ENCODE measurements at regions of chr20 and their contacts with region 1.

Region 1: DNA sequence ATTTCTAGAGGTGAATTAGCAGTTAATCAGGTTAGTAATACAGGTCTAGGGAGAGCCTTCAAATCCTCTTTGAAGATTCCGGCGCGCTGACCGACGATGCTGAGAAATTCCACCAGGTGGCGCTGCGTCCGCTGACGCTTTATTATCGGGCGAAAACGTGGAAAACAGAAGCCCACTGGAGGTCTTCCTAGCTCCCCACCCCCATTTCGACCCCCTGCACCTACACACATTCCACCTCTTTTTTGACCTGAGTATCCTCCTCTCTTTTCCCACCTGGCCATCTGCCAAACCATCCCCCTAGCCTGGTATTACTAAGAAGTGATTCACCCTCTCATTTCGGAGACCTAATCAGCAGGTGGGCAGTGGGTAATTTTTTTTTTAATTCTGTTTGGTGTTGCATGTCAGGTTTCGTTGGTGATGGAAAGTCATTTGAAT is 65.4 kb upstream of the RIN2 start:
- DNase-seq: peak; percentile 58
- H3K4me3 ChIP-seq: peak overlapping the region; percentile 59
- H3K27ac ChIP-seq: no peak overlapping the region
- H3K4me1 ChIP-seq: peaks cover 21% of the 10 kb centered on the region
- H3K27me3 ChIP-seq: no peaks in the 10 kb centered on the region

Region 2: GRCh38 chr20:20003031-20003954 is 310.6 kb after region 1 on chr20:
- in situ Hi-C with region 1: loop called (anchors 10 kb)
- DNase-seq: peak; percentile 52
- H3K4me3 ChIP-seq: no peak overlapping the region
- H3K27ac ChIP-seq: peak overlapping the region; percentile 25
- H3K4me1 ChIP-seq: peaks cover 21% of the 10 kb centered on the region
- H3K27me3 ChIP-seq: no peaks in the 10 kb centered on the region

Region 3: GRCh38 chr20:20174089-20174836 is 481.6 kb after region 1 on chr20:
- in situ Hi-C with region 1: no loop called
- DNase-seq: no peak
- H3K4me3 ChIP-seq: no peak overlapping the region
- H3K27ac ChIP-seq: no peak overlapping the region
- H3K4me1 ChIP-seq: no peaks in the 10 kb centered on the region
- H3K27me3 ChIP-seq: no peaks in the 10 kb centered on the region

Region 4: DNA sequence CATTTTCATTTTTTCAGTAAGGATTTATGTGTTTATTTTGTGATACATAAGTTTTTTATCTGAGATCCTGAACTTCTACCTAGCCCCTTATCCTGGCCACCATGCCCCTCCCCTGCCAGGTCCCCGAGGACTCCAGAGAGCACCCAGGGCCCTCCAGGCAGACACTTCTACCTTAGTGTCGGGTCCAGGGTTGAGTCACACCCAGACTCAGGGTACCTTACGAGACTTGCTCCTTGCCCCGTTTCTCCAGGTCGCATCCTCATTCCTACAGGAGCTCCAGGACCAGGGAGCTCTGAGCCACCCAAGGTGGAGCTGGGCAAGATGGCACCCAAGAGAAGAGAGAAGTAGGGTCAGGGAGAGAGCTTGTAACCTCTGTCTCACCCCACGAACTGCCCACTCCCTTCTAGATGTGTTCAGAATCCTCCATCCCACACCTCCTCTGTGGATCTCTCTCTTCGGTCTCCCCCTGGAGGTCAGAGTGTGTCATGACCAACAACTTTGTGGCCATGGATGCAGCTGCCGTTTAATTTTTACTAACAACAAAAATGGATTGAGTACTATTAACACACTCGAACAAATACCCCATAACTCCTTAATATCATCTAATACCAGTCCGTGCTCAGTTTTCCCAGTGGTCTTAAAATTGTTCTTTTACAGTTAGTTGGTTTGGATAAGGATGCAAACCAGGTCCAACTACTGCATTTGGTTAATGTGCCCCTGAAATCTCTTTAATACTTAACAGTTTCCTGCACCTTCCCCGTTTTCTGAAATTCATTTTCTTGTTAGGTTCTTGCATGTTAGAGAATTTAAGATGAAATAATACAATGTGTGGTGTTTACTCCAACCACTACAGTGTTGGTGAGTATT is 544.6 kb after region 1 on chr20:
- in situ Hi-C with region 1: loop called (anchors 25 kb)
- DNase-seq: peak; percentile 69
- H3K4me3 ChIP-seq: no peak overlapping the region
- H3K27ac ChIP-seq: no peak overlapping the region
- H3K4me1 ChIP-seq: no peaks in the 10 kb centered on the region
- H3K27me3 ChIP-seq: peaks cover 5% of the 10 kb centered on the region; the same call in 1 of the 2 replicates

Measured in GM23248 (cell line).